ENCODE measurements at regions of chr3 and their contacts with region 1.

Region 1: DNA sequence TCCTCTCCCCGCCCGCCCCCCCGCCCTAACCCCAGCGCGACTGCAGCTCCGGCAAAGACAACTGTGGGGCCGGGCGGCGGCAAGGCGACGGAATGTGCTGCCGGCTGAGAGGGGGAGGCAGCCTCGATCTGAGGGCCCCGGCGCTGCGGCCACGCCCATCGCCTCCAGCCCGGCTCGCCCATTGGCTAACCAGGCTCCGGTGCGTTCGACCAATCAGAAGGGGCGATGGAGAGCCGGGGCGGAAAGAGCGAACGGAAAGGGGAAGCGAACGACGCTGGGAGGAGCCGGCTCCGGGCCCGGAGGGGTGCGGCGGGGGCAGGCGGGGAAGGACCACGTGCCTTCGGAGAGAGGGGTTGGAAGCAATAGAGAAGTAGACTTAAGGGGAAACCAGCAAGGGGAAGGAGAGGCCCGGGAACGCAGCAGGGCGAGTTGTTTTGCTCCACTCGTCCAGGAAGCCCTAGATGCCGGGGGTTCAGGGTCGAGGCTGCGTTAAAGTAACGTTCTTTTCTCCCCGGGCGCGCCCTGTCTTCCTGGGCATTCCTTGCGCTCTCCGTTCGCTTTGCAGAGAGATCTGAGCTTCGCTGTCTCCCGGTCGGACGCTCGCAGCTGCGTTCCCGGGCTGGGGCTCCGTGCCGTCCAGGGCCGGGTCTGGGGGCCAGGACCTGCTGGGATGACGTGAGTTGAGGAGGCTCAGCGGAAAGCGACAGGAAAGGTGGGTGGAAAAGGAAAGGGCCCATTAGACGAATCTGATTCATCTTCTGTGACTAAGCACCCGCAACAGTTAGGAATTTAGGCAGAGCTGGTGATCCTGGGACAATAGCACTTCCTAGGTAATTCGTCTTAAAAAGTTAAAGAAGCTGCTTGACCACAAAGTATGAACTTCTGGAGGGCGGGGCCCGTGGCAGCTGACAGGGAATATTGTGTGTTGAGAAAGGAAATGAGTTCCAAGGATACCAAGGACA is at the start of gene KPNA4:
- DNase-seq: peak; percentile 93 to 99 (median 96)
- ATAC-seq: peak; percentile 88
- H3K4me3 ChIP-seq: peak within 1 kb of the TSS; percentile 64
- H3K4me3 Mint-ChIP-seq: peak within 1 kb of the TSS; percentile 99
- H3K27ac ChIP-seq: peak within 1 kb of the TSS; percentile 85 to 88
- H3K27ac Mint-ChIP-seq: peak within 1 kb of the TSS; percentile 96
- H3K4me1 ChIP-seq: peaks cover 22% of the 10 kb centered on the region
- H3K4me1 Mint-ChIP-seq: peaks cover 59% of the 10 kb centered on the region
- H3K27me3 ChIP-seq: no peaks in the 10 kb centered on the region
- H3K27me3 Mint-ChIP-seq: no peaks in the 10 kb centered on the region
- CTCF ChIP-seq: no peak
- total RNA-seq, gene KPNA4: 44.0 to 49.4 TPM

Region 2: GRCh38 chr3:158644345-158644908 is 1921.3 kb before region 1 on chr3 and contains the start of gene GFM1:
- CTCF ChIA-PET with region 1: no interaction called
- POLR2A ChIA-PET with region 1: no interaction called
- intact Hi-C with region 1: loop called in 1 of 2 experiments (anchors 10 kb)
- DNase-seq: peak; percentile 79 to 97 (median 86)
- ATAC-seq: peak; percentile 94
- H3K4me3 ChIP-seq: peak within 1 kb of the TSS; percentile 99
- H3K4me3 Mint-ChIP-seq: peak within 1 kb of the TSS; percentile 95
- H3K27ac ChIP-seq: peak within 1 kb of the TSS; percentile 54 to 81
- H3K27ac Mint-ChIP-seq: peak within 1 kb of the TSS; percentile 64
- H3K4me1 ChIP-seq: peaks cover 16% of the 10 kb centered on the region
- H3K4me1 Mint-ChIP-seq: peaks cover 53% of the 10 kb centered on the region
- H3K27me3 ChIP-seq: no peaks in the 10 kb centered on the region
- H3K27me3 Mint-ChIP-seq: no peaks in the 10 kb centered on the region
- CTCF ChIP-seq: peak; percentile 92
- total RNA-seq, gene GFM1: 27.5 to 29.4 TPM

Region 3: DNA sequence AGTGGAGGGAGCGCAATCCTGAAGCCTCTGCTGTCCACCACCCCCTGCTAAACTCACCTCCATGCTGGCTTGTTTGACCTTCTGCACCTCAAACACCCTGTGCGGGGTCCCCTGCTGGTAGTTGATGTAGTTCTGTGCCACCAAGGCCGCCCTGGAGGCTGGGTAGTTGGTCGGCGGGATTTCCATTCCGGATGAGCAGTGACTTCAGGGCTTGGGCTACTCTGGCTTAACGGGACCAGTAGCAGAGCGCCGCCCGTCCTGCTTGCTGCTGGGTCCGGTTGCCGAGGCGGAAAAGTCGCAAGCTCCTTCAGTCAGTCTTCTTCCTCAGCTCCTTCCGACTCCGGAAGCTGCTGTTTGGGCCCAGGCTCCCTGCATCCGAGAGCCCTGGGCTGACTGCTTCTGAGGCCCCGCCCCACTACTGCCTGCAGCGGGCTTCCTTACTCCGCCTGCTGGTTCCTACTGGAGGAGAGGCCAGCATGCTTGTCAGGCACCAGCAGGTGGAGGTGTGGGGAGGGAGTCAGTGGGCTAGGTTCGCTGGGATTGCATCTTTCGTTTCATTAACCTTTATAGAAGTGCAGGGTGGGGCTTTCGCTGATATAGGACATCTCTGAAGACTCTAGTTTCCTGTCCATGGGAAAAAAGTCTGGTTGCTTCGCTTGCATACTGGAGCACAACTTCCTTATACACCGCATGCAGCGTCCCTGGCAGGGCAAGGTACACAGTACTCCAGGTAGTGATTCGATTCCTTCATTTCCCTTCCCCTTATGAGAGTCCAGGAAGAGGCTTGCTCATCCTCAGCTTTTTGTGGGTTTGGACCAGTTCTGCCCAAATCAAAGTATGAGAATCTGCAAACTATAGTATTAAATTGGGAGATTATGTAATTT is 1893.2 kb before region 1 on chr3 and contains the start of gene LXN:
- CTCF ChIA-PET with region 1: no interaction called
- POLR2A ChIA-PET with region 1: no interaction called
- intact Hi-C with region 1: loop called in 1 of 2 experiments (anchors 10 kb)
- DNase-seq: peak; percentile 60 to 92 (median 74)
- ATAC-seq: peak; percentile 99
- H3K4me3 ChIP-seq: peak within 1 kb of the TSS; percentile 74
- H3K4me3 Mint-ChIP-seq: peak within 1 kb of the TSS; percentile 94
- H3K27ac ChIP-seq: peak within 1 kb of the TSS; percentile 41 to 49
- H3K27ac Mint-ChIP-seq: peak within 1 kb of the TSS; percentile 85
- H3K4me1 ChIP-seq: peaks cover 19% of the 10 kb centered on the region
- H3K4me1 Mint-ChIP-seq: peaks cover 32% of the 10 kb centered on the region
- H3K27me3 ChIP-seq: no peaks in the 10 kb centered on the region
- H3K27me3 Mint-ChIP-seq: no peaks in the 10 kb centered on the region
- CTCF ChIP-seq: peak; percentile 80
- total RNA-seq, gene LXN: 2.1 to 3.0 TPM

Region 4: GRCh38 chr3:160399125-160400029 is 166.3 kb before region 1 on chr3 and contains the starts of genes IFT80 and SMC4:
- CTCF ChIA-PET with region 1: no interaction called
- POLR2A ChIA-PET with region 1: interaction called, 4 read pairs
- intact Hi-C with region 1: loop called (anchors 2 to 10 kb)
- DNase-seq: peak; percentile 93 to 98 (median 95)
- ATAC-seq: peak; percentile 95
- H3K4me3 ChIP-seq: peak within 1 kb of the TSS; percentile 89
- H3K4me3 Mint-ChIP-seq: peak within 1 kb of the TSS; percentile 93
- H3K27ac ChIP-seq: peak within 1 kb of the TSS; percentile 84 to 96
- H3K27ac Mint-ChIP-seq: peak within 1 kb of the TSS; percentile 97
- H3K4me1 ChIP-seq: peaks cover 22% of the 10 kb centered on the region
- H3K4me1 Mint-ChIP-seq: peaks cover 58% of the 10 kb centered on the region
- H3K27me3 ChIP-seq: peaks cover 0 to 4% of the 10 kb centered on the region in 2 experiments
- H3K27me3 Mint-ChIP-seq: peaks cover 29% of the 10 kb centered on the region
- CTCF ChIP-seq: no peak
- total RNA-seq, gene IFT80: 16.1 to 18.2 TPM
- total RNA-seq, gene SMC4: 52.3 to 58.8 TPM

Region 5: DNA sequence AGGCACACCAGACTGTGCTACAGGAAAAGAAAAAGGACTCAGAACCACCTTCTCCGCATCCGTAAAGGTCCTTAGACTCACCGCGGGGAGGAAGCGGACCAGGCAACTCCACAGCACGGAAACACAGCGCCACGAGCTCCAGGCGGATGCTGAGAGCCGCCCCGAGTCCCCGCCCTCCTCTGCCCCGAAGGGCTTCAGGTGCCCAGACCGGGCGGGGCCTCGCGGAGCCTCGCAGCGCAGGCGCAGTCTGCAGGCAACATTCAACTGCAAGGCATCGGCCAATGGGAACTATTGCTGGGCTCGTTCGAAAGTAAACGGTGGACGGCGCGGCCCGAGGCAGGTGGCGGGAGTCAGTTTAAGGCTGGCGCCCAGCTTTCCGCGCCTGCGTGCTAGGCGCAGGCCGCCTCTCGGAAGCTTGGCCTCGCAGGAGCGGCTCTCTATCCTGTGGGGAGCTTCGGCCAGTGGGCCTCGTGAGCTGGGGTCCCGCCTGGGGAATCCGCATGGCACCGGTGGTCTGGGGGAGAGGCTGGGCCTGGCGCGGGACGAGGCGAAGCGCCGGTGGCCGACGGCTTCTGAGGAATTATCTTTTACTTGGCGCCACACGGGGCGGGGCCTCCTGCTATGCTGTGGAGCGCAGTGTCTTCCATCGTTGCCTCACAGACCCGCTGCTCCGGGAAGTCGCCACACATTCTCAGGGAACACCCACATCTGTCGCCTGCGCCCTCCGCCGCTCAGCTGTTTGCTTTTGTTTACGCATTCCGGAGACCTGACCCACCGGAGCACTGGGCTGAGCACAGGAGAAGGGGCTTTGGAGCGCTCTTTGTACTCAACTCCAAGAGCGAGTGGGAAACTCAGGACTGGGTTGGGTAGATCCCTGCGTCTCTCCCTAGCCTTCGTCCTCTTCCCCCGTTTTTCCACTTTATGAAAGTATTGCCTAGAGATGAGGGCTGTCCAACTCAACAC is 115.8 kb before region 1 on chr3 and contains the start of gene TRIM59:
- CTCF ChIA-PET with region 1: no interaction called
- POLR2A ChIA-PET with region 1: interaction called, 21 read pairs
- intact Hi-C with region 1: loop called (anchors 2 to 5 kb)
- DNase-seq: peak; percentile 91 to 99 (median 96)
- ATAC-seq: peak; percentile 97
- H3K4me3 ChIP-seq: peak within 1 kb of the TSS; percentile 81
- H3K4me3 Mint-ChIP-seq: peak within 1 kb of the TSS; percentile 95
- H3K27ac ChIP-seq: peak within 1 kb of the TSS; percentile 74 to 84
- H3K27ac Mint-ChIP-seq: peak within 1 kb of the TSS; percentile 95
- H3K4me1 ChIP-seq: peaks cover 22% of the 10 kb centered on the region
- H3K4me1 Mint-ChIP-seq: peaks cover 38% of the 10 kb centered on the region
- H3K27me3 ChIP-seq: no peaks in the 10 kb centered on the region
- H3K27me3 Mint-ChIP-seq: no peaks in the 10 kb centered on the region
- CTCF ChIP-seq: no peak
- total RNA-seq, gene TRIM59: 16.2 to 16.4 TPM

Region 6: DNA sequence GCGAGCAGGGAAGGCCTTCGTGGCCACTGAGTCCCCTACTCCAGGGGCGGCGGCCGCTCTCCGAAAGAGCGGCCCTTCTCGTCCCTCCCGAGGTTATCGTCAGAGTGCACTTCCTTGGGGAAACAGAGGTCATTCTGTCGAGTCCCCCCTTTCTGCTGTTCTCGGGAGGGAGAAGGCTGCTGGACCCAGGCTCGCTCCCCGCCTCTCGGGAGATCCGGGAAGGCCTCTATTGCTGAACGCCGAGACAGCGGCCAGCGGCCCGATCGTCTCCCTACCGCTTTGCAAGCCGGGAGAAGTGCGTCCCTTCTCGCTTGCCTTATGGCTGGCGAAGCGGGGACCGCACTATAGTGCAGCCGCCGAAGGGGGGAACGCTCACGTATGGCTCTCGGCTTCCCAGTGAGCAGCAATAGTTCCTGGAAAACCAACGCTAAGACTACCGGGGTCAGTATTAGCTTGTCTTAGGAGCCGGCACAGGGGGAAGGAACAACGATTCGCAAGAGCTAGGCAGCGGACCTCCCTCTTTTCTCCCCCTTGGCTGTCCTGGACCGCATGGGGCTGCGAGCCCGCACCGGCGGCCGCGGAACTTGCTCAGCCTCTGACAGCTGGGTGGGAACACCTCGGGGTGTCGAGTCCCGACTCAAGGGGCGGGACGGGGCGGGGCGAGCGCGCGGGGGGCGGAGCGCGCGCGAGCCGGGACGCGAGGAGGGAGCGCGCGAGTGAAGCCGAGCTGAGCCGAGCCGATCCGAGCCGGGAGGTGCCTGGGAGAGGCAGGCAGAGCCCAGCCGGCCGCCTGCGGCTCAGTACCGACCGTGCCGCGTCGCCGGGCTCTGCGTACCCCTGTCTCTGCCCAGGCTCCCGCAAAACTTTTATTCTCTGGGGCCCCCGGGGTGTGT is 189.4 kb after region 1 on chr3:
- CTCF ChIA-PET with region 1: no interaction called
- POLR2A ChIA-PET with region 1: interaction called, 9 read pairs
- intact Hi-C with region 1: loop called (anchors 2 kb)
- DNase-seq: peak; percentile 80 to 95 (median 88)
- ATAC-seq: peak; percentile 85
- H3K4me3 ChIP-seq: peak overlapping the region; percentile 93
- H3K4me3 Mint-ChIP-seq: peak overlapping the region; percentile 94
- H3K27ac ChIP-seq: peak overlapping the region; percentile 51 to 81
- H3K27ac Mint-ChIP-seq: peak overlapping the region; percentile 89
- H3K4me1 ChIP-seq: peaks cover 27% of the 10 kb centered on the region
- H3K4me1 Mint-ChIP-seq: peaks cover 42% of the 10 kb centered on the region
- H3K27me3 ChIP-seq: peaks cover 7% of the 10 kb centered on the region in 2 experiments
- H3K27me3 Mint-ChIP-seq: peaks cover 21% of the 10 kb centered on the region
- CTCF ChIP-seq: no peak

Region 7: GRCh38 chr3:161220850-161221753 is 655.4 kb after region 1 on chr3 and contains the start of gene NMD3:
- CTCF ChIA-PET with region 1: no interaction called
- POLR2A ChIA-PET with region 1: interaction called, 5 read pairs
- intact Hi-C with region 1: loop called in 1 of 2 experiments (anchors 5 kb)
- DNase-seq: peak; percentile 83 to 95 (median 88)
- ATAC-seq: peak; percentile 97
- H3K4me3 ChIP-seq: peak within 1 kb of the TSS; percentile 86
- H3K4me3 Mint-ChIP-seq: peak within 1 kb of the TSS; percentile 95
- H3K27ac ChIP-seq: peak within 1 kb of the TSS; percentile 73 to 77
- H3K27ac Mint-ChIP-seq: peak within 1 kb of the TSS; percentile 94
- H3K4me1 ChIP-seq: peaks cover 21% of the 10 kb centered on the region
- H3K4me1 Mint-ChIP-seq: peaks cover 46% of the 10 kb centered on the region
- H3K27me3 ChIP-seq: peaks cover 0 to 6% of the 10 kb centered on the region in 2 experiments
- H3K27me3 Mint-ChIP-seq: peaks cover 13% of the 10 kb centered on the region
- CTCF ChIP-seq: no peak
- total RNA-seq, gene NMD3: 58.4 to 60.1 TPM